HEK293T (cell line): ENCODE measurements at regions of chr2 and their contacts with region 1.

Region 1: DNA sequence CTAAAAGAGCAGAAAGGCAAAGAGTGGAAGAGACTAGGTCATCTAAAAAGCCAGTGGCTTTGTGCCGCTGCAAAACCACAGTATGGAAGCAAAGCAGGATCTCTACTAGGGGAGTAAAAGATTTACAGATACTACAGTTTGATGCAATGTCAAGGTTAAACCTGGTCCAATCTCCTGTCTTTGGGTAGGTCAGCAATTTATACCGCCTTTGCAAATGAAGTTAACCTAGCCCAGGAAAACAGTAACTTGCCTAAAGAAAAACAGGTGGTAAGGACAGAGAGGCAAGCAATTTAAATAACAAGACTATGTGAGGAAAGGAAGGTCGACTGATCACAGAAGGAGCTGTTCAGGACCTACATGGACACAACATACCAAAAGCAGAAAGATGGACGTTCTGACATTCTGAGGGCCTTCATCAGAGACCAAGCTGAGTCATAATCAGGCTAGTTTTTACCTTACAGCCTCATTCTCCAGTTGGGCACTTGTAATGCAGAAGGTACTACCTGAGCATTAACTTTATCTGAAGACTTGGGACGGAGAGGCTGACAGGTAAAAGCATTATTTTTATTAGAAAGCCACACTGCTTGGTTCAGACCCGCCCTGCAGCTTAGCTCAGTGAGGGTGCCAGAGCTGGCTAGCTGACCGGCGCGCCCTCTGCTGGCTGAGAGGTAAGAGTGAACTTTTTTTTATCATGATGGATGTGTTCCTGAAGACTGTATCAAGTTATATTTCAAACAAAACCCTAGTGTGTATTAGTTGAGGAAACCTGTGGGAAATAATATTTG is 15.9 kb downstream of the CDKL4 start:
- DNase-seq: peak; percentile 75

Region 2: GRCh38 chr2:38947240-38948239 is 280.3 kb before region 1 on chr2:
- CTCF ChIA-PET with region 1: interaction called, 36 read pairs
- POLR2A ChIA-PET with region 1: interaction called, 10 read pairs
- DNase-seq: peak; percentile 85

Region 3: DNA sequence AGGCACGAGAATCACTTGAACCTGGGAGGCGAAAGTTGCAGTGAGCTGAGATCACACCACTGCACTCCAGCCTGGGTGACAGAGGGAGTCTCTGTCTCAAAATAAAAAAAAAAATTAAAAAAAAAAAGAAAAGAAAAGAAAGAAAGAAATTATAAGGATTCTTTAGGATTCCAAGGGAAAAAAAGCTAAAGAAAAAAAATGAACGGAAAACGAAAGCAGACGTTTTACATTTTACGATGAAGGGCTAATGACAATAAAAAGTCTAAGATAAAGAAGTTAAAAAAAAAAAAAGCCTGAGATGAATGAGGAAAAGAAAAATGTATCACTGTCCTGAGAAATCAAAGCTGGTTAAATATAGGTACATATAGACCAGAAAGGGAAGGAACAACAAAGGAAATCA is 165.5 kb before region 1 on chr2:
- CTCF ChIA-PET with region 1: interaction called, 21 read pairs
- POLR2A ChIA-PET with region 1: no interaction called
- DNase-seq: no peak

Region 4: GRCh38 chr2:39124000-39124745 is 103.6 kb before region 1 on chr2:
- CTCF ChIA-PET with region 1: interaction called, 10 read pairs
- POLR2A ChIA-PET with region 1: interaction called, 21 read pairs
- DNase-seq: peak; percentile 92

Region 5: DNA sequence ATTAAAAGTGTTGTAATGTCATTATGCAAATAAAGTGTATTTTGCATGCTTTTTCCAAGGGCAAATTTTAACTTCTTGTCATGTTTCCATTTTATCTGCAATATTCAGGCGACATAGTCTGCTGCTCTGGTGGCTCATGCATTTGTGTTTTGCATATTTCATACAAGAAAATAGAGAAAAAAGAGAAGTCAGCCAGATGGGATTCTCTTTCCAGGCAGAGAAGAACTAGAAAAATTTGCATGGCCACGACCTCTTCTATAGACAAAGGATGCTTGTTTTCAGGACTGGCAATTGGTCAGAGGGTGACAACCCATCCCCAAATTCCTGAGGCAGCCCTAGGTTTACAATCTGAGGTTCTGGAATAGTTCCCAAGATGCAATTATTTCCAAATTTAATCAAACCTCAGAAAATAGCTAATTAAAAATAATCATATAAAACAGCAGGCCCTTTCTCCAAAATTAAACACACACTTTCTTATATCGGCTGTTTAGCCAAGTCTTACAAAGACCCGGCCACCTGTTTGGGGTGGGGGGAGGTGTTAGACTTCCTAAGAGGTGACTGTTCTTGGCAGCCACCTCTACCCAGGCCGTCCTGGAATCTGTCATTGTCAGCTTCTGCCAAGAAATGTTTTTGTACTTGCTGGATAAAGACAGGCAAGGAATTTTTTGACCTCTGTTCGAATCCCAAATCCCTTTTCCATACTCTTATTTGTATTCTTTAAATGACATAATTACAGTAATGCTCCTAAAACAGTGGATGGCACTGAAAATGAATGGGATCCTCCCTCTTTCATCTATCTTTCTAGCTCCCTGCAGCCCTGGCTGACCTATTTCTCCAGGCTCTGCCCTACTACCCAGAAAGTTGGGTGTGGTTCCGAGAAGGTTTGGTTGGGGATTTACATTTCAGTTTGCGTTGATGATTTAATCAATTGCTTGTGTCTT is 86.2 kb before region 1 on chr2:
- CTCF ChIA-PET with region 1: no interaction called
- POLR2A ChIA-PET with region 1: no interaction called
- DNase-seq: no peak

Region 6: DNA sequence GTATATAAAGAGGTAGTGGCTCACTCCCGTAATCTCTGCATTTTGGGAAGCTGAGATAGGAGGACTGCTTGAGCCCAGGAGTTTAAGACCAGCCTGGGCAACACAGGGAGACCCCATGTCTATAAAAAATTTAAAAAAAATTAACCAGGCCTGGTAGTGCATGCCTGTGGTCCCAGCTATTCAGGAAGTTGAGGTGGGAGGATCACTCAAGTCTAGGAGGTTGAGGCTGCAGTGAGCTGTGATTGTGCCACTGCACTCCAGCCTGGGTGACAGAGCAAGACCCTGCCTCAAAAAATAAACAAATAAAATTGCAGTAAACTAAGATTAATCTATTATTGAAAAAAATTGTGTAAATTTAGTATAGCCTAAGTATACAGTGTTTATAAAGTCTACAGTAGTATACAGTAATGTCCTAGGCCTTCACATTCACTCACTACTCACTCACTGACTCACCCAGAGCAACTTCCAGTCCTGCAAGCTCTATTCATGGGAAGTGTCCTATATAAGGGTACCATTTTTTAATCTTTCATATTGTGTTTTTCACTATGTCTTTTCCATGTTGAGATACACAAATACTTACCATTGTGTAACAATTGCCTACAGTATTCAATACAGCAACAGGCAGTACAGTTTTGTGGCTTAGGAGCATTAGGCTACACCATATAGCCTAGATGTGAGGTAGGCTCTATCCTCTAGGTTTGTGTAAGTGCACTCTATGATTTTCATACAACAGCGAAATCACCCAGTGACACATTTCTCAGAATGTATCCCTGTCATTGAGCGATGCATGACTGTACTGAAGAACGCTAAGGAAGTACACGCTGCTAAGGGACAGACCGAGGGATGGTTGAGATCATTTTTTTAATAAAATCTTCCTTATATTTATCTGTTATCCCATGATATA is 219.7 kb after region 1 on chr2:
- CTCF ChIA-PET with region 1: no interaction called
- POLR2A ChIA-PET with region 1: no interaction called
- DNase-seq: no peak